ENCODE measurements at regions of chr2 and their contacts with region 1.

Region 1: DNA sequence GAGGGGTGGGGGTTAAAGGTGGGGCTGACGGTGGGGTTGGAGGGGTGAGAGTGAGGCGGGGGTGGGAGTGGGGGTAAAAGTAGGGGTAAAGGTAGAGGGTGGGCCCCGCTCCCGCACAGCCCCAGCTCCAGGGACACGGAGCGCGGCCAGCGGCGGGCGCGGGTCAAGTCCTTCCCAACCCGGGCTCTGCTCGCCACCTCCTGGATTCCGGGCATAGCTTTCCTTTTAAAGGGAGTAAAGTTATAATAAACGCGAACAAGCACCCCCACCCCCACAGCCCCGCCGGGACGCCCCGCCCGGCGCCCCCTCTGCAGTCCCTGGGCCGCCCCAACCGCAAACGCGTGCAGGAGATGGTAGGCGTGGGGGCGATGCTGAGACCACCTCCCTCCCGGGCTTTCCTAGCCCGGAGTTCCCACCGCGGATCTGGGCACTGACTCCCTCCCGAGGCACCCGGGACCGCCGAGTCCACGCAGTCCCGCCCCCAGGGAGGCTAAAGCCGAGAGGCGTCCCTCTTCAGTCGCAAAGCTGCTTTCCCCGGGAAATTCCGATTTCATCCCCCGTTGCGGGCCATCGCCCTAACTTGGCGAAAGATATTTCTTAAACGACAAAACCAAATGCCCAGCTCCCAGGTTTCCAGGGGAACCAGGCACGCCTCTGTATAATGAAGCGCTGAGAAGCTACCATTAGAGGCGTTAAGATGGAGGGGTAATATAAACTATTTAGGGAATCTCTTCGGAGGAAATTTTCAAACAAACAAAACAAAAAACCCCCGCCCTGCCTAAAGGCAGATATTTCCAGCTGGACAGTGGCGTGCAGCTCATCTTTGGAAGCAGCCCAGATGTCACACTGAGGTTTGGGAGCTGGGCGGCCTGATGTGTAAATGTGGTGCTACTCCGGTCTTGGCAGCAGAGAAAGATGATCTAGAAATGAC is at the start of gene LIMS2:
- DNase-seq: peak in 1 of 2 donors; percentile 82
- H3K4me3 ChIP-seq: peak within 1 kb of the TSS; percentile 94 to 99
- H3K27ac ChIP-seq: peak within 1 kb of the TSS; percentile 89 to 92
- H3K4me1 ChIP-seq: peaks cover 0 to 23% of the 10 kb centered on the region in 2 donors
- H3K27me3 ChIP-seq: no peaks in the 10 kb centered on the region
- CTCF ChIP-seq: peak in 2 of 3 experiments; percentile 16 to 22
- total RNA-seq, gene LIMS2: 169 TPM

Region 2: DNA sequence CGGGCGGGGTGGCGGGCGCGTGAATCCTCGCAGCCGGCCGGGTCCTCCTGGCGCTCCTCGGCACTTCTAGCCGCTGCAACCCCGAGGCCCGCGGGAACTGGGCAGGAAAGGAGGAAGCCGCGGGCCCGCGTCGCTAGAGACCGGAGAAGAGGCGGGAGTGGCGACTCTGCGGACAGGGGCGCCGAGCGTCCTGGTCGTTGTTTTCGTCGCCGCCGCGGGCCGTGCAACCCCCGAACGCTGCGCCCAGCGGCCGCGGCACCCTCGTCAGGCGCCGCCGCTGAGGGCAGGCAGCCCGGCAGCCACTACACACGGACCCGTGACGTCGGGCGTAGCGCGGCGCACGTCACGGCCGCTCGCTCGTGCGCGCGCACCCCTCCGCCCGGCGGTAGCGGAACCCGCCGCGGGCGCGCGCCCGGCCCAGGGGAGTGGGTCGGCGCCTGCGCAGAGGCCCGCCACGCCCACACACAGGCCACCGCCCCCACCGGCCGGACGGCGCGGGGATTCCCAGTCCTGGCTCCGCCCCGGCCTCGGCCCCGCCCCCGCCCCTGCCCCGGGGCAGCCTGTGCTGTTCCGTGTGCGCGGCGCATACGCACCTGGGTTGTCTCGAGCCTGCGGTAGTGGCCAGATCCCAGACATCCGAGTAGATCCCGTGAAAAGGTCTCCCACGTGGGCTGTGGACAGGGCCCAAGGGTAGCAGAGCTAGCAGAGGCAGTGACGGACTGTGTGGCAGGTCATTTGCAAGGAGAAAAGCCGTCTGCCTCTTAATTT is 287.8 kb before region 1 on chr2 and contains the start of gene MAP3K2:
- intact Hi-C with region 1: loop called (anchors 10 kb)
- DNase-seq: peak; percentile 77 to 96
- H3K4me3 ChIP-seq: peak within 1 kb of the TSS; percentile 90 to 99
- H3K27ac ChIP-seq: peak within 1 kb of the TSS; percentile 98 to 100
- H3K4me1 ChIP-seq: peaks cover 8 to 15% of the 10 kb centered on the region in 2 donors
- H3K27me3 ChIP-seq: no peaks in the 10 kb centered on the region
- CTCF ChIP-seq: no peak
- total RNA-seq, gene MAP3K2: 47.7 TPM

Region 3: GRCh38 chr2:127448526-127448925 is 227.1 kb before region 1 on chr2:
- intact Hi-C with region 1: no loop called
- DNase-seq: no peak
- H3K4me3 ChIP-seq: no peak overlapping the region
- H3K27ac ChIP-seq: no peak overlapping the region
- H3K4me1 ChIP-seq: no peaks in the 10 kb centered on the region
- H3K27me3 ChIP-seq: no peaks in the 10 kb centered on the region
- CTCF ChIP-seq: no peak

Region 4: DNA sequence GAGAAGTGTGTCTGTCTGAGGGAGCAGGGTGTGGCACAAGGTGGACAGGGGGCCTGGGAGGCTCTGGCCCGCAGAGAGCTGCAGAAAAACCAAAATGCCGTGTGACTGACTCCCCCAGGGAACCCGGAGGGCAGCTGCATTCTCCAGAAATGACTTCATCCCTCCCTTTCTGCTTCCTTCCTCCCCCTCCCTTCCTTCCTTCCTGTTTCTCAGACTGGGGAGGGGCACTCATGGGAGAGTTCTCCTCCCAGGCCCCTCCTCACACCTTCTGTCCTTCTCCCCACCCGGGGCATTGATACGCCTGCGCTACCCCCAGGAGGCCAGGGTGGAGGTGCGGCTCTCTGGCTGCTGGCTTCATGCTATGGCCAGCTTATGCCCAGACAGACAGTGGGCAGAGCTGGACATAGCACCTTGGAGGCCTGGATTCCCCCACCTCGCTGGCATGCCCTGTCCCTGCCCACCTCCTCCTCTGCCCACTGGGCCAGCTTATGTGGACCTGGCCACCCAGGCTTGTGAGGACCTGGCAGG is 37.8 kb before region 1 on chr2:
- intact Hi-C with region 1: loop called (anchors 5 kb)
- DNase-seq: no peak
- H3K4me3 ChIP-seq: no peak overlapping the region
- H3K27ac ChIP-seq: peak overlapping the region; percentile 87 to 90
- H3K4me1 ChIP-seq: peaks cover 16 to 36% of the 10 kb centered on the region in 2 donors
- H3K27me3 ChIP-seq: no peaks in the 10 kb centered on the region
- CTCF ChIP-seq: no peak

Region 5: DNA sequence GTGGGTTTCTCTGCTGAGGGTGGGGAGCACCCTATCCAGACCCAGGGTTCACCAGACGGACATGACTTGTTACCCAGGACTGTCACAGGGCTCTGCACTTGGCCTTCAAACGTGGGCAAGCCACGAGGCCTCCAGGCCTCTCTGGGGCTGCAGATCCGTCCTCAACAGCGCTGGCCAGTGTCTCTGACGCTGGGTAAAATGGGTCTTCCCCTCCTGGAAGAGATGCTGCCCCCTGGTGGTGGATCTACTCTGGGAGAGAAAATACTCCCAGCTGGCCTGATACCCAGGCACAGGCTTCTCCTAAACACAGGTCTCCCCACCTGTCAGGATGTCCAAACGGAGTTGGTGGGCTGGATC is 25.9 kb before region 1 on chr2:
- intact Hi-C with region 1: loop called (anchors 1 kb)
- DNase-seq: peak in 1 of 2 donors; percentile 91
- H3K4me3 ChIP-seq: peak overlapping the region in 1 of 2 donors; percentile 5
- H3K27ac ChIP-seq: peak overlapping the region; percentile 40 to 58
- H3K4me1 ChIP-seq: peaks cover 18 to 51% of the 10 kb centered on the region in 2 donors
- H3K27me3 ChIP-seq: no peaks in the 10 kb centered on the region
- CTCF ChIP-seq: peak; percentile 68 to 80 (median 80)

Region 6: DNA sequence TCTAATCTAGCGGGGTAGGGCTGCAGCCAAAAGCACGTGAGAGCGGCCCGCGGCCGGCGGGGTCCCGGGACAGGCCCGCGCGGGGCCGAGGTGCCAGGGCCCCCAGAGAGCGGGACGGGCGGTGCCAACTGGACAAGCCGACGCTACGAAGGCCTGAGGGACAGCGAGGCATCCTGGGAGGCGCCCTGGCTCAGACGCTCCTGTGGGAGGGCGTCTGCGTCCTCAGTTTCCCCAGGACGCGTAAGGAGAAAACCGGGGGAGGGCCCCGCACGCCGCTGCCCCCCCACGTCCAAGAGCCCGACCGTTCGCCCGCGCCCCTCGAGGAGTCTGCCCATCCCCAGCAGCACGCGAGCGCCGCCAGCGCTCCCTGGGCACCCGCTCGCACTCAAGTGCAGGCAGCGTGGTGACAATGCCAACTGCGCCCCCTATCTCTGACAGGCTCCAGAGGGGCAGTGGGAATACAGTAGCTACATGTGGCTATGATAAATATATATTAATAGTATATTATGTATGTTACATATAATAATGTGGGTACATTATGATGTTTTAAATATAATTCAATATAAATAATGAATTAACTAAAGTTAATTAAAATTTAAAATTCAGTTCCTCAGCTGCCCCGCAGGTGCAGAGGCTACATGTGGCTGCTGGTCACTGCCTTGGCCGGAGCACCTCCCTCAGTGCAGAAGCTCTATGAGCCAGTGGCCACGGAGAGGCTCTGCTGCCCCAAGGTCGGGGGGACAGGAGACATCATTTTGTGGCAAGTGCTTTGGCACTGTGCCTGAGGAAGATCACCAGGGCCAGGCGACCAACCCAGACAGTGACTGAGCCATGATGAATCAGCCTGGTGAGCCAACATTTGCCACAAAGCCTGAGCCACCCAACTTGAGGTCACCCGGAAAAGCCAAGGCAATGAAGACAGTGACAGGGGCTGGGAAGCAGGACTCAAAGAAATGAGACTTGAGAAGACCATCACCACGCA is 20.2 kb after region 1 on chr2:
- intact Hi-C with region 1: loop called (anchors 1 kb)
- DNase-seq: peak in 1 of 2 donors; percentile 85
- H3K4me3 ChIP-seq: peak overlapping the region; percentile 23 to 63
- H3K27ac ChIP-seq: peak overlapping the region; percentile 67 to 93
- H3K4me1 ChIP-seq: peaks cover 0 to 6% of the 10 kb centered on the region in 2 donors
- H3K27me3 ChIP-seq: no peaks in the 10 kb centered on the region
- CTCF ChIP-seq: peak; percentile 49 to 83 (median 66)